GM10248 (cell line): ENCODE measurements at regions of chr9 and their contacts with region 1.

Region 1: GRCh38 chr9:2645569-2645968 is 24.0 kb downstream of the VLDLR start:
- DNase-seq: peak; percentile 40
- CTCF ChIP-seq: no peak

Region 2: GRCh38 chr9:2634153-2634552 is 11.4 kb before region 1 on chr9:
- CTCF ChIA-PET with region 1: interaction called, 10 read pairs
- POLR2A ChIA-PET with region 1: no interaction called
- DNase-seq: no peak
- CTCF ChIP-seq: no peak

Region 3: GRCh38 chr9:2718001-2718697 is 72.6 kb after region 1 on chr9:
- CTCF ChIA-PET with region 1: no interaction called
- POLR2A ChIA-PET with region 1: no interaction called
- DNase-seq: no peak
- CTCF ChIP-seq: no peak